AG04449 (cell line): ENCODE measurements at regions of chr7 and their contacts with region 1.

Region 1: GRCh38 chr7:151623766-151624165 is 104.1 kb upstream of the RHEB start:
- DNase-seq: no peak
- H3K4me3 ChIP-seq: no peak overlapping the region
- CTCF ChIP-seq: no peak

Region 2: DNA sequence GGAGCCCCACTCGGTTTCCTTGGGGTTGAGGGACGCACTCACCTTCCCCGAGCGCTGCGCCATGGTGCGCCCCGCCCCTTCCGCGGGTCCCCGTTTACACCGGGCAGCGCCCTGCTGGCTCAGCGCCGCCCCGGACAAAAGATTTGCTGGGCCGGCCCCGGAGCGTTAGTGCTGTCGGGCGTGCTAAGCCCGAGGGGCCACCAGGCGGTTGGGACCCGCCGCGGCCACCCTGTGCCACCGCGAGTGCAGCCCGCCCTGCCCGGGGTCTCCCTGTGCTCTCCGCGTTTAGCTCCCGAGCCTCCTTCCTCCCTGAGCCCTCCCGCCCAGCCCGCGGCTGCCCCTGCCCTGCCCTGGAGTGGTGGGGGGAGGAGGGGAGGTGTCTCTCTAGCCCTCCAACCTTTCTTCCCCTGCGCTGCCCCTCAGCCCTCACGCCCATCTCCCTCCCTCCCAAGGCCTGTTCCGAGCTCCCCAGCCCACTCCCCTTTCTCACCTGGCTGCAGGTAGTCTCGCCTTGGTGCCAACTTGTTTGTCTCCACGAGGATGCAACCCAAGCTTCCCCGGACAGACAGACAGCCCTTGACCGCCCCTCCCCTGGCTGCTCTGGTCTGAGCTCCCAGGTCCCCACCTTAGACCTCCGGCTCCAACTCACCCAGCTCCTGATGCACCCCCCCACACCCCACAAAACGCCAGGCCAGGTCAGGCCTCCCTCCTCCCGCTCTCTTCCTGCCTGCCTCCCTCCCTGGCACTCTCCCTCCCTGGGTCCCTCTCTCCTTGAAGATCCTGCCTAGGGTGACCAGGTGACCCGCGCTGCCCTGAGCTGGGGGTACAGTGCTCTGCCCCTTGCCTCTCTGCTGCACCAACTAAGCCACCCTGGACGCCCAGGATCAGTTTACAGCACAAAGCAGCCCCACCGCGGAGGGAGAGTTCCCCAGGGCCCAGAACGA is 183.6 kb before region 1 on chr7 and contains the start of gene CRYGN:
- CTCF ChIA-PET with region 1: no interaction called
- POLR2A ChIA-PET with region 1: no interaction called
- DNase-seq: no peak
- H3K4me3 ChIP-seq: no peak within 1 kb of the TSS; the same call in 1 of the 2 replicates
- CTCF ChIP-seq: no peak

Region 3: GRCh38 chr7:151514461-151515275 is 109.1 kb before region 1 on chr7:
- CTCF ChIA-PET with region 1: no interaction called
- POLR2A ChIA-PET with region 1: no interaction called
- DNase-seq: no peak
- H3K4me3 ChIP-seq: no peak overlapping the region
- CTCF ChIP-seq: no peak

Region 4: GRCh38 chr7:151611041-151611440 is 12.7 kb before region 1 on chr7:
- CTCF ChIA-PET with region 1: interaction called, 11 read pairs
- POLR2A ChIA-PET with region 1: no interaction called
- DNase-seq: no peak
- H3K4me3 ChIP-seq: no peak overlapping the region
- CTCF ChIP-seq: no peak

Region 5: GRCh38 chr7:151936207-151936606 is 312.4 kb after region 1 on chr7:
- CTCF ChIA-PET with region 1: no interaction called
- POLR2A ChIA-PET with region 1: no interaction called
- DNase-seq: no peak
- H3K4me3 ChIP-seq: no peak overlapping the region
- CTCF ChIP-seq: no peak